ENCODE measurements at regions of chr1 and their contacts with region 1.

Region 1: DNA sequence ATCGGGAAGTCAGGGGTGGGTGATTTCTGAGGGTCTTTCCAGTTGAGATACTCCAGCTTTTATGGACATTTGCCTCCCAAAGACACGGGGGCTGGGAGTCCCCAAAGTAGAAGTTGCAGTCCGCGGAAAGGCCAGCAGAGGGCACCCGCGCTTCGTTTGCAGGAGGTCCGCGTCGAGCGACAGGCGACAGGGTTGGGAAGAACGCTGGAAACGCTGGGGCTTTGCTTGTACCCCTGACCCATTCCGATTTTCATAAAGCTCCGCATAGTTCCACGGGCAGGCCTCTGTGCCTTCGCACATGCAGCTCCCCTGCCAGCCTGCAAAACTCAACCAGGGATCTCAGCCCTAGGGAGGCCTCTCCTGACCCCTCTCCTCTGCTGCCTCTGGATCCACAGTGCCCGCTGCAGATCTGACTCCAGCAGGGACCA is 44.2 kb upstream of the LAPTM5 start:
- DNase-seq: peak; percentile 97
- ATAC-seq: peak; percentile 62
- H3K4me3 Mint-ChIP-seq: peak overlapping the region; percentile 54
- H3K27ac Mint-ChIP-seq: no peak overlapping the region; the same call in 1 of the 2 replicates
- H3K4me1 Mint-ChIP-seq: peaks cover 34% of the 10 kb centered on the region
- H3K27me3 Mint-ChIP-seq: peaks cover 7% of the 10 kb centered on the region
- CTCF ChIP-seq: peak; percentile 92

Region 2: GRCh38 chr1:30718636-30719405 is 83.0 kb before region 1 on chr1:
- CTCF ChIA-PET with region 1: interaction called, 46 read pairs
- POLR2A ChIA-PET with region 1: no interaction called
- DNase-seq: peak; percentile 92
- ATAC-seq: peak; percentile 63
- H3K4me3 Mint-ChIP-seq: peak overlapping the region; percentile 75
- H3K27ac Mint-ChIP-seq: no peak overlapping the region
- H3K4me1 Mint-ChIP-seq: peaks cover under 1% of the 10 kb centered on the region
- H3K27me3 Mint-ChIP-seq: peaks cover 4% of the 10 kb centered on the region
- CTCF ChIP-seq: peak; percentile 98

Region 3: GRCh38 chr1:30790850-30791778 is 10.7 kb before region 1 on chr1:
- CTCF ChIA-PET with region 1: interaction called, 21 read pairs
- POLR2A ChIA-PET with region 1: no interaction called
- DNase-seq: no peak
- ATAC-seq: no peak
- H3K4me3 Mint-ChIP-seq: no peak overlapping the region
- H3K27ac Mint-ChIP-seq: no peak overlapping the region
- H3K4me1 Mint-ChIP-seq: peaks cover 4% of the 10 kb centered on the region
- H3K27me3 Mint-ChIP-seq: no peaks in the 10 kb centered on the region; the same call in 1 of the 2 replicates
- CTCF ChIP-seq: no peak

Region 4: GRCh38 chr1:30847358-30847972 is 45.7 kb after region 1 on chr1:
- CTCF ChIA-PET with region 1: interaction called, 32 read pairs
- POLR2A ChIA-PET with region 1: no interaction called
- DNase-seq: peak; percentile 67
- ATAC-seq: peak; percentile 77
- H3K4me3 Mint-ChIP-seq: no peak overlapping the region
- H3K27ac Mint-ChIP-seq: 0 out of 2 replicates have a peak overlapping the region, but pooled peaks have one; percentile 35
- H3K4me1 Mint-ChIP-seq: peaks cover 43% of the 10 kb centered on the region
- H3K27me3 Mint-ChIP-seq: no peaks in the 10 kb centered on the region
- CTCF ChIP-seq: no peak

Region 5: GRCh38 chr1:30887485-30888315 is 85.9 kb after region 1 on chr1:
- CTCF ChIA-PET with region 1: interaction called, 10 read pairs
- POLR2A ChIA-PET with region 1: no interaction called
- DNase-seq: no peak
- ATAC-seq: peak; percentile 17
- H3K4me3 Mint-ChIP-seq: no peak overlapping the region
- H3K27ac Mint-ChIP-seq: peak overlapping the region; percentile 83
- H3K4me1 Mint-ChIP-seq: peaks cover 28% of the 10 kb centered on the region
- H3K27me3 Mint-ChIP-seq: no peaks in the 10 kb centered on the region
- CTCF ChIP-seq: no peak

Region 6: GRCh38 chr1:30919025-30919881 is 117.5 kb after region 1 on chr1:
- CTCF ChIA-PET with region 1: interaction called, 606 read pairs
- POLR2A ChIA-PET with region 1: interaction called, 5 read pairs
- DNase-seq: no peak
- ATAC-seq: peak; percentile 39
- H3K4me3 Mint-ChIP-seq: no peak overlapping the region
- H3K27ac Mint-ChIP-seq: no peak overlapping the region
- H3K4me1 Mint-ChIP-seq: no peaks in the 10 kb centered on the region
- H3K27me3 Mint-ChIP-seq: no peaks in the 10 kb centered on the region
- CTCF ChIP-seq: no peak

Region 7: DNA sequence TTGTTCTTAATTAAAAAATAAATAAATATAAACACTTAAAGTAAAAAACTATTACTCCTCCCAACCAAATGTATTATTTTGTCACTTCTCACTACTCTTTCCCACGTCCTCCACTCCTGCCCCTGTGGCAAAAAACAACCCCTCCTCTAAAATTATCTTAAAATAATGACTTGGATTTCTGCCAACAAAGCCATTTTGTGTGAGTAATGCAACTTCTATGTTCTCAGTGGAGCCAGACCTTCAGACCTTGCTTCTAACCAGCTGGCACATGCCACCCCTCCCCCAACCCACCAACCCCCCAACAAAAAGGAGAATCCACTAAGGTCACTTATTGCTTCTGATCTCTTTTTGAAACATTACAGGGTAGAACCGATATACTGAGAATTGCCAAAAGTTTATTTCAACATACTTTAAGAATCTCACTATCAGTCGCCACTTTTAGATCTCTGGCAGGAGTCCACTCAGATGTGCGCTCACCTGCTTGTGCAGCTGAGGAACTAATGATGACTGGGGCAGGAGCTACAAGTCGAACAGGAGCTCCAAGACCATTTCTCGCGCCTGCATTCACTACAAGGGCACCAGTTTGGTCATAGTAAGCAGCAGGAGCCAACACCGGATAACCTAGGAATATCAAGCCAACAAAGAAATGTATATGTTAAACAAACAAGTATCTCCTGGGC is 165.0 kb after region 1 on chr1:
- CTCF ChIA-PET with region 1: no interaction called
- POLR2A ChIA-PET with region 1: no interaction called
- DNase-seq: no peak
- ATAC-seq: no peak
- H3K4me3 Mint-ChIP-seq: no peak overlapping the region
- H3K27ac Mint-ChIP-seq: 0 out of 2 replicates have a peak overlapping the region, but pooled peaks have one; percentile 22
- H3K4me1 Mint-ChIP-seq: peaks cover 7% of the 10 kb centered on the region
- H3K27me3 Mint-ChIP-seq: no peaks in the 10 kb centered on the region
- CTCF ChIP-seq: no peak

Region 8: DNA sequence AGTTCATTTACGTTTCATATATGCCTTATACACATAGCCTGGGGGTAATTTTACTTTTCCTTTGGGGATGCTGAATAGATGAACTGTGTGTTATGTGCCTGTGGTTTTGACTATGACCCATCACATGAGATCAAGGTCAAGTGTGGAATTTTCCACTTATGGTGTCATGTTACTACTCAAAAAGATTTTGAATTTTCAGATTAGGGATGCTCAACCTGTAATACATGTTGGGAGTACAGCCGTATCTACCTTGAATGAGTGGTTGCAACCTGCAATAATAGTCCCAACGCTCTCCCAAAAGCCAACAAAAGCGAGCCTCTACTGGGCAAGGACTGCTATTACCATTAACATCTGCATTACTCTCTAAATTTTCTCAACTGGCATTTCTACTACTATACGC is 175.3 kb after region 1 on chr1:
- CTCF ChIA-PET with region 1: no interaction called
- POLR2A ChIA-PET with region 1: no interaction called
- DNase-seq: no peak
- ATAC-seq: peak; percentile 61
- H3K4me3 Mint-ChIP-seq: no peak overlapping the region
- H3K27ac Mint-ChIP-seq: peak overlapping the region; percentile 87; the same call in 1 of the 2 replicates
- H3K4me1 Mint-ChIP-seq: peaks cover 11% of the 10 kb centered on the region; the same call in 1 of the 2 replicates
- H3K27me3 Mint-ChIP-seq: no peaks in the 10 kb centered on the region
- CTCF ChIP-seq: no peak